Transverse colon (tissue), 4 donors: ENCODE measurements at regions of chr13 and their contacts with region 1.

Region 1: GRCh38 chr13:61202042-61202441 is 213.6 kb downstream of the PCDH20 start:
- DNase-seq: no peak
- H3K4me3 ChIP-seq: no peak overlapping the region
- H3K27ac ChIP-seq: no peak overlapping the region
- H3K4me1 ChIP-seq: no peaks in the 10 kb centered on the region
- H3K27me3 ChIP-seq: no peaks in the 10 kb centered on the region
- CTCF ChIP-seq: no peak
- EP300 ChIP-seq: no peak
- POLR2A ChIP-seq: no peak

Region 2: GRCh38 chr13:61261746-61262472 is 59.9 kb after region 1 on chr13:
- in situ Hi-C with region 1: loop called in 1 of 4 experiments (anchors 10 kb)
- intact Hi-C with region 1: no loop called
- DNase-seq: no peak
- H3K4me3 ChIP-seq: no peak overlapping the region
- H3K27ac ChIP-seq: no peak overlapping the region
- H3K4me1 ChIP-seq: no peaks in the 10 kb centered on the region
- H3K27me3 ChIP-seq: no peaks in the 10 kb centered on the region
- CTCF ChIP-seq: no peak
- EP300 ChIP-seq: no peak
- POLR2A ChIP-seq: no peak

Region 3: GRCh38 chr13:61286148-61286745 is 84.2 kb after region 1 on chr13:
- in situ Hi-C with region 1: no loop called
- intact Hi-C with region 1: no loop called
- DNase-seq: no peak
- H3K4me3 ChIP-seq: no peak overlapping the region
- H3K27ac ChIP-seq: no peak overlapping the region
- H3K4me1 ChIP-seq: no peaks in the 10 kb centered on the region
- H3K27me3 ChIP-seq: no peaks in the 10 kb centered on the region
- CTCF ChIP-seq: no peak
- EP300 ChIP-seq: no peak
- POLR2A ChIP-seq: no peak